ENCODE measurements at regions of chr18 and their contacts with region 1.

Region 1: GRCh38 chr18:46148810-46149209 is 44.6 kb downstream of the HAUS1 start:
- DNase-seq: peak; percentile 21
- H3K4me3 ChIP-seq: no peak overlapping the region
- H3K27ac ChIP-seq: no peak overlapping the region
- H3K4me1 ChIP-seq: no peaks in the 10 kb centered on the region
- H3K27me3 ChIP-seq: no peaks in the 10 kb centered on the region
- CTCF ChIP-seq: peak; percentile 27 to 68 (median 54)
- POLR2A ChIP-seq: no peak

Region 2: DNA sequence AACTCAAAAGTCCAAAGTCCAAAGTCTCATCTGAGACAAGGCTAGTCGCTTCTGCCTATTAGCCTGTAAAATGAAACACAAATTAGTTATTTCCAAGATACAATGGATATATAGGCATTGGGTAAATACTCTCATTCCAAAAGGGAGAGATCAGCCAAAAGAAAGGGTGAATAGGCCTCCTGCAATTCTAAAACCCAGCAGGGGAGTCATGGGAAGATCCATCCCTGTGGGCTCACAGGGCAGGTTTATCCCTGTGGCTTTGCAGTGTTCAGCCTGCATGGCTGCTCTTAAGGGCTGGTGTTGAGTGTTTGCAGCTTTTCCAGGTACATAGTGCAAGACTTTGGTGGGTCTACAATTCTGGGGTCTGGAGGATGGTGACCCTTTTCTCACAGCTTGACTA is 445.9 kb before region 1 on chr18:
- intact Hi-C with region 1: no loop called
- DNase-seq: no peak
- H3K4me3 ChIP-seq: no peak overlapping the region
- H3K27ac ChIP-seq: no peak overlapping the region
- H3K4me1 ChIP-seq: no peaks in the 10 kb centered on the region
- H3K27me3 ChIP-seq: no peaks in the 10 kb centered on the region
- CTCF ChIP-seq: no peak
- POLR2A ChIP-seq: no peak

Region 3: GRCh38 chr18:46657115-46657955 is 508.5 kb after region 1 on chr18 and contains the start of gene LOXHD1:
- intact Hi-C with region 1: loop called (anchors 2 kb)
- DNase-seq: no peak
- H3K4me3 ChIP-seq: no peak within 1 kb of the TSS
- H3K27ac ChIP-seq: no peak within 1 kb of the TSS
- H3K4me1 ChIP-seq: no peaks in the 10 kb centered on the region
- H3K27me3 ChIP-seq: no peaks in the 10 kb centered on the region
- CTCF ChIP-seq: no peak
- POLR2A ChIP-seq: no peak
- total RNA-seq, gene LOXHD1: 1.4 TPM in 1 of 2 donors, not detected in the other